ENCODE measurements at regions of chrX and their contacts with region 1.

Region 1: DNA sequence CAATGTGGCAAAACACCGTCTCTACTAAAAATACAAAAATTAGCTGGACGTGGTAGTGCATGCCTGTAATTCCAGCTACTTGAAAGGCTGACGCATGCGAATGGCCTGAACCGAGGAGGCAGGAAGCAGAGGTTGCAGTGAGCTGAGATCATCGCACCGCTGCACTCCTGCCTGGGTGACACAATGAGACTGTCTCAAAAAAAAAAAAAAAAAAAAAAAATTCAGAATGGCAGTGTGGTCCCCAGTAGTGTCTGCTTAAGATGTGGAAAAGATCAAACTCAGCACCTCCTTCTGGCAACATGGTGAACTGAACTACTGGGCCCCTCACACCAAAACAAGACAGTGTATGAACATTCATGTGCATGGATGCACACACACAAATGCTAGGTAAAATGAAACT is 32.2 kb downstream of the SMS start:
- DNase-seq: peak; percentile 64
- H3K4me3 Mint-ChIP-seq: no peak overlapping the region
- H3K27ac Mint-ChIP-seq: peak overlapping the region; percentile 87
- H3K4me1 Mint-ChIP-seq: peaks cover 35% of the 10 kb centered on the region
- H3K27me3 Mint-ChIP-seq: no peaks in the 10 kb centered on the region

Region 2: GRCh38 chrX:21926527-21927278 is 46.0 kb before region 1 on chrX:
- CTCF ChIA-PET with region 1: no interaction called
- intact Hi-C with region 1: loop called (anchors 1 kb)
- DNase-seq: peak; percentile 26
- H3K4me3 Mint-ChIP-seq: no peak overlapping the region
- H3K27ac Mint-ChIP-seq: peak overlapping the region; percentile 68
- H3K4me1 Mint-ChIP-seq: peaks cover 26% of the 10 kb centered on the region
- H3K27me3 Mint-ChIP-seq: no peaks in the 10 kb centered on the region

Region 3: DNA sequence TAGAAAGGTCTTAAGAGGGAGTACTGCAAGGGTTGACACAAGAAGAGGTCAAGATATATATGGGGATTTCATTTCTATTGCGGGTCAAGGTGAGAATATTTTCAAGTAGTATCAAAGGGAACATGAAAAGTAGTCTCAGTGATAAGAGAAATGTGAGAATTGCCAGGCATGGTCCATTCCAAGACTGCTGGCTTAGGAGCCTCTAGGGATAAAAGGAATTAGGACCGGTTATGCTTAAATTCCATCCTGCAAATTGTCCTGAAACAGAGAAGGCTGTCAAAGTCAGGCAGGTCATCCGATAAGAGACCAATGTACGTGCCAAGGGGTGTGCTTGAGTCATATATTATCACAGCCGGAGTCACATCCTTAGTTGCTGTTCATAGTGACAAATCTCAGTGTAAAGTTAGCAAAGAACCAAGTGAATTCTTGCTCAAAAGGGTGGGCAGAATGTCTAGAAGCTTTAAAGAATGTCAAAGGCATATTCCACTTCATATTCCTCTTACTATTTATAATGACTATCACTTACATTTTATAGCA is 433.5 kb after region 1 on chrX:
- CTCF ChIA-PET with region 1: no interaction called
- intact Hi-C with region 1: no loop called
- DNase-seq: no peak
- H3K4me3 Mint-ChIP-seq: no peak overlapping the region
- H3K27ac Mint-ChIP-seq: no peak overlapping the region
- H3K4me1 Mint-ChIP-seq: no peaks in the 10 kb centered on the region
- H3K27me3 Mint-ChIP-seq: no peaks in the 10 kb centered on the region

Measured in activated naive CD4-positive, alpha-beta T cell treated with anti-CD3 and anti-CD28 coated beads for 36 hours (primary cell).